ENCODE measurements at regions of chr3 and their contacts with region 1.

Region 1: DNA sequence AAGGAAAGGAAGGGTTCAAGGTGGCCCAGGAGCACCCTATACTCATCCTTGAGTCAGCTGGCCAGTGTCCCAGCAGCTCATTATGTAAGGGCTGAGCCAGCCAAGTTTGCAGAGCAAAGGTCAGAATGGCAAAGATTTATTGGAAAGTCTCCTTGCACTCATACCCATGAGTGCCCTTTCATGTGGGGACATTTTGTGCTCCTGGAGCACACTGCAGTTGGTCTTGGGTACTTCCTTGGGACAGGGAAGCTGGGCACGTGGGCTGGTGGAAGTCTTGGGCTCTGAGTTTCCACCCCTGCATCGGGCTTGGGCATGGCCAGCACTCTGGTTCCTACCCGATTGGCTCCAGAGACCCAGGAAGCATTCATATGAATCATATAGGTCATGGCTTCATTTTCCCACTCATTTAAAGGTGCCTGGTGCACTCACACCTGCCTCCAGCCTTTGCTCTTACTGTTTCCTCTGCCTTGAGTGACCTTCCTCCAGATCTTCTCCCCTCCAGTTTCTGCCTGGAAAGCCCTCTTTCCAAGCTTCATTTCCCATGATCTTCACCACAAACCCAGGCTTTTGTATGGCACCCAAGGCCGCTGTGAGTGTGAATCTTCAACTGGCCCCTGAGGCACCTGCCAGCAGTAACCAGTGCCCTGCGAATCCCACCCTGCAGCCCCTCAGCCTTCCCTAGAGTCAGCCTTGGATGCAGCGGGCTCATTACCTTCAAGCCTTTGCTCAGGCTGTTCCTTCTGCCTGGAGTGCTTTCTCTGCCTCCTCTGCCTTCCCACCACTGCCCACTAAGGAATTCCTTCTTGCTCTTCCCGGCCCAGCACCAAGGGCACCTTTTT is 10.5 kb upstream of the PRKCD start:
- DNase-seq: peak; percentile 27 to 67
- ATAC-seq: peak in 3 of 4 donors; percentile 20 to 83 (median 81)
- H3K4me3 ChIP-seq: no peak overlapping the region
- H3K27ac ChIP-seq: no peak overlapping the region
- H3K4me1 ChIP-seq: peaks cover 29% of the 10 kb centered on the region
- H3K27me3 ChIP-seq: no peaks in the 10 kb centered on the region
- CTCF ChIP-seq: no peak

Region 2: GRCh38 chr3:51637941-51638471 is 1512.5 kb before region 1 on chr3:
- intact Hi-C with region 1: loop called in 1 of 2 experiments (anchors 10 kb)
- DNase-seq: no peak
- ATAC-seq: peak in 3 of 4 donors; percentile 30 to 72 (median 33)
- H3K4me3 ChIP-seq: no peak overlapping the region
- H3K27ac ChIP-seq: no peak overlapping the region
- H3K4me1 ChIP-seq: no peaks in the 10 kb centered on the region
- H3K27me3 ChIP-seq: no peaks in the 10 kb centered on the region
- CTCF ChIP-seq: peak; percentile 45

Measured in psoas muscle (tissue), 8 donors.